CD8-positive, alpha-beta T cell (primary cell): ENCODE measurements at regions of chr9 and their contacts with region 1.

Region 1: DNA sequence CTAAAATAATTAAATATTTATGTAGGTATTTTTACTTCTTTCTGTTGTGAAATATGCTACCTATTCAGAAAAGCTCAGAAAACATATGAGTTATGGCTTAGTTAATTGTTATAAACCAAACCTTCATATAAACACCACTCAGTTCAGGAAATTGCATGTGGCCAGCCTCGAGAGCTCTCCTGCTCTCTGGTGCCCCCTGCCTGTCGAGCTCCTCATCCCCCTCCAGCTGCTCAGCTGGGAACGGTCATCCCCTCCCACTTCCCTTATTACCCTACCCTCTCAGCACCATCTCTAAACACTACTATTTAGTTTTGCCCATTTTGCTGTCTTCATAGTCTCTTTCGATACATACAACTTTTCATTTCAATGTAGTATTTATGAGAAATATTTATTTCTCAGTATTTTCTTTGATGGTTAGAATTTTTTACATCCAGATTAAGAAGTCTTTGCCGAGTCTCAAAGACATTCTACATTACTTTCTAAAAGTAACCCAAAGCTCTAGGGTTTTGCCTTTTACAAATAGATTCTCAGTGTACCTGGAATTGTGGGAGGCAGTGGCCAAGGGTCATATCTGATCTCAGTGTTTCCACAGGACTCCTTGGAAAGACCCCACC is 51.2 kb upstream of the SEMA4D start:
- DNase-seq: peak; percentile 72 to 92 (median 87)
- ATAC-seq: peak; percentile 98
- H3K4me3 ChIP-seq: no peak overlapping the region
- H3K4me3 Mint-ChIP-seq: no peak overlapping the region
- H3K27ac ChIP-seq: no peak overlapping the region
- H3K27ac Mint-ChIP-seq: peak overlapping the region; percentile 60
- H3K4me1 ChIP-seq: peaks cover 15% of the 10 kb centered on the region
- H3K4me1 Mint-ChIP-seq: peaks cover 23% of the 10 kb centered on the region
- H3K27me3 ChIP-seq: no peaks in the 10 kb centered on the region
- H3K27me3 Mint-ChIP-seq: no peaks in the 10 kb centered on the region
- CTCF ChIP-seq: peak; percentile 99

Region 2: GRCh38 chr9:89398621-89399020 is 150.5 kb before region 1 on chr9:
- CTCF ChIA-PET with region 1: interaction called, 13 read pairs
- POLR2A ChIA-PET with region 1: no interaction called
- intact Hi-C with region 1: no loop called
- DNase-seq: no peak
- ATAC-seq: no peak
- H3K4me3 ChIP-seq: no peak overlapping the region
- H3K4me3 Mint-ChIP-seq: no peak overlapping the region
- H3K27ac ChIP-seq: no peak overlapping the region
- H3K27ac Mint-ChIP-seq: no peak overlapping the region
- H3K4me1 ChIP-seq: no peaks in the 10 kb centered on the region
- H3K4me1 Mint-ChIP-seq: peaks cover 17% of the 10 kb centered on the region
- H3K27me3 ChIP-seq: no peaks in the 10 kb centered on the region
- H3K27me3 Mint-ChIP-seq: no peaks in the 10 kb centered on the region
- CTCF ChIP-seq: no peak

Region 3: GRCh38 chr9:89428901-89429890 is 119.9 kb before region 1 on chr9:
- CTCF ChIA-PET with region 1: interaction called, 128 read pairs
- POLR2A ChIA-PET with region 1: interaction called, 21 read pairs
- intact Hi-C with region 1: loop called (anchors 1 kb)
- DNase-seq: peak; percentile 44 to 87 (median 73)
- ATAC-seq: peak; percentile 65
- H3K4me3 ChIP-seq: no peak overlapping the region
- H3K4me3 Mint-ChIP-seq: peak overlapping the region; percentile 45
- H3K27ac ChIP-seq: peak overlapping the region in 1 of 2 experiments; percentile 66
- H3K27ac Mint-ChIP-seq: peak overlapping the region; percentile 98
- H3K4me1 ChIP-seq: peaks cover 99% of the 10 kb centered on the region
- H3K4me1 Mint-ChIP-seq: peaks cover 95% of the 10 kb centered on the region
- H3K27me3 ChIP-seq: no peaks in the 10 kb centered on the region
- H3K27me3 Mint-ChIP-seq: no peaks in the 10 kb centered on the region
- CTCF ChIP-seq: peak; percentile 75

Region 4: GRCh38 chr9:89448381-89448780 is 100.8 kb before region 1 on chr9:
- CTCF ChIA-PET with region 1: interaction called, 47 read pairs
- POLR2A ChIA-PET with region 1: interaction called, 13 read pairs
- intact Hi-C with region 1: no loop called
- DNase-seq: peak in 5 of 9 experiments; percentile 55 to 80 (median 71)
- ATAC-seq: peak; percentile 60
- H3K4me3 ChIP-seq: no peak overlapping the region
- H3K4me3 Mint-ChIP-seq: peak overlapping the region; percentile 67
- H3K27ac ChIP-seq: peak overlapping the region; percentile 21 to 47
- H3K27ac Mint-ChIP-seq: peak overlapping the region; percentile 97
- H3K4me1 ChIP-seq: peaks cover 89% of the 10 kb centered on the region
- H3K4me1 Mint-ChIP-seq: peaks cover 92% of the 10 kb centered on the region
- H3K27me3 ChIP-seq: no peaks in the 10 kb centered on the region
- H3K27me3 Mint-ChIP-seq: no peaks in the 10 kb centered on the region
- CTCF ChIP-seq: no peak

Region 5: GRCh38 chr9:89466451-89467277 is 82.5 kb before region 1 on chr9:
- CTCF ChIA-PET with region 1: interaction called, 17 read pairs
- POLR2A ChIA-PET with region 1: interaction called, 14 read pairs
- intact Hi-C with region 1: no loop called
- DNase-seq: peak in 4 of 9 experiments; percentile 38 to 70 (median 46)
- ATAC-seq: peak; percentile 7
- H3K4me3 ChIP-seq: peak overlapping the region in 1 of 2 experiments; percentile 38
- H3K4me3 Mint-ChIP-seq: peak overlapping the region; percentile 80
- H3K27ac ChIP-seq: peak overlapping the region; percentile 61 to 71
- H3K27ac Mint-ChIP-seq: peak overlapping the region; percentile 99
- H3K4me1 ChIP-seq: peaks cover 98% of the 10 kb centered on the region
- H3K4me1 Mint-ChIP-seq: peaks cover 96% of the 10 kb centered on the region
- H3K27me3 ChIP-seq: no peaks in the 10 kb centered on the region
- H3K27me3 Mint-ChIP-seq: no peaks in the 10 kb centered on the region
- CTCF ChIP-seq: no peak

Region 6: DNA sequence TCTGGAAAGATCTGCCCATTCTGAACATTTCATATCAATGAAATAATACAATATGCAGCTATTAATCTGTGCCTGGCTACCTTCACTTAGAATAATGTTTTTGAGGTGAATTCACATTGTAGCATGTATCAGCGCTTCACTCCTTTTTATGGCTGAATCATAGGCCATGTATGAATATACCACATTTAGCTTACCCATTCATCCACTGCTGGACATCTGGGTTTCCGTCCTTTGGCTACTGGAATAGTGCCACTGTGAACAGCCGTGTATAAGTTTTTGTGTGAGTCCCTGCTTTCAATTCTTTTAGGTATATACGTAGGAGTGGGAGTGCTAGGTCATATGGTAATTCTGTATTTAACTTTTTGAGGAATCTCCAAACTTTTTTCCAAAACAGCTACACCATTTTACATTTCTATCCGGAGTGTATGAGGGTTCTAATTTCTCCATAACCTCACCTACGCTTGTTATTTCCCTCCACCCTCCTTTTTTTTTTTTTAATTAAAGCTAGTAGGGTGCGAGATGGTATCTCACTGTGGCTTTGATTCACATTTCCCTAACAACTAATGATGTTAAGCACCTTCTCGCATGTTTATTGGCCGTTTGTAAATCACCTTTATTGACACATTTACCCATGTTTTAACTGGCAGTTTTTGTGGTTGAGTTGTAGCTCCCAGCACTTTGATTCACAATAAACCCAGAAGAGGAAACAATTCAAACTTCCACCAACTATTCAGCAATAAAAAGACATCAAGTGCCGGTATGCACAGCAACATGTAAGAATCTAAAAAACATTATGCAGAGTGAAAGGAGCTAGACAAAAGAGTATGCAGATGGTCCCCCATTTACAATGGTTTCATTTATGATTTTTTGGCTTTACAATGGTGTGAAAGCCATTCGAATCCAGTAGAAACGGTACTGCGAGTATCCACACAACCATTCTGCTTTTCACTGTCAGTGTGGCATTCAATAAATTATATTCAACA is 59.3 kb before region 1 on chr9:
- CTCF ChIA-PET with region 1: interaction called, 54 read pairs
- POLR2A ChIA-PET with region 1: interaction called, 6 read pairs
- intact Hi-C with region 1: loop called in 1 of 2 experiments (anchors 2 kb)
- DNase-seq: peak in 2 of 9 experiments; percentile 85 to 92
- ATAC-seq: peak; percentile 85
- H3K4me3 ChIP-seq: peak overlapping the region in 1 of 2 experiments; percentile 9
- H3K4me3 Mint-ChIP-seq: peak overlapping the region; percentile 72
- H3K27ac ChIP-seq: peak overlapping the region; percentile 1 to 73
- H3K27ac Mint-ChIP-seq: peak overlapping the region; percentile 92
- H3K4me1 ChIP-seq: peaks cover 91% of the 10 kb centered on the region
- H3K4me1 Mint-ChIP-seq: peaks cover 93% of the 10 kb centered on the region
- H3K27me3 ChIP-seq: no peaks in the 10 kb centered on the region
- H3K27me3 Mint-ChIP-seq: no peaks in the 10 kb centered on the region
- CTCF ChIP-seq: no peak

Region 7: GRCh38 chr9:89536145-89536574 is 13.0 kb before region 1 on chr9:
- CTCF ChIA-PET with region 1: interaction called, 61 read pairs
- POLR2A ChIA-PET with region 1: interaction called, 5 read pairs
- intact Hi-C with region 1: no loop called
- DNase-seq: peak in 2 of 9 experiments; percentile 73 to 88
- ATAC-seq: peak; percentile 83
- H3K4me3 ChIP-seq: peak overlapping the region; percentile 9 to 13
- H3K4me3 Mint-ChIP-seq: peak overlapping the region; percentile 73
- H3K27ac ChIP-seq: peak overlapping the region; percentile 29 to 79
- H3K27ac Mint-ChIP-seq: peak overlapping the region; percentile 94
- H3K4me1 ChIP-seq: peaks cover 96% of the 10 kb centered on the region
- H3K4me1 Mint-ChIP-seq: peaks cover 94% of the 10 kb centered on the region
- H3K27me3 ChIP-seq: no peaks in the 10 kb centered on the region
- H3K27me3 Mint-ChIP-seq: no peaks in the 10 kb centered on the region
- CTCF ChIP-seq: no peak